Ovary (tissue), 10 donors: ENCODE measurements at regions of chr19 and their contacts with region 1.

Region 1: GRCh38 chr19:9584073-9584833 is at the start of gene ZNF121:
- DNase-seq: peak; percentile 80 to 90 (median 85)
- H3K4me3 ChIP-seq: peak within 1 kb of the TSS; percentile 85
- H3K27ac ChIP-seq: peak within 1 kb of the TSS; percentile 85 to 88
- H3K4me1 ChIP-seq: peaks cover 4% of the 10 kb centered on the region
- H3K27me3 ChIP-seq: no peaks in the 10 kb centered on the region
- CTCF ChIP-seq: no peak
- EP300 ChIP-seq: no peak
- POLR2A ChIP-seq: peak; percentile 64
- total RNA-seq, gene ZNF121: 19.6 to 49.0 (median 33.2) TPM

Region 2: DNA sequence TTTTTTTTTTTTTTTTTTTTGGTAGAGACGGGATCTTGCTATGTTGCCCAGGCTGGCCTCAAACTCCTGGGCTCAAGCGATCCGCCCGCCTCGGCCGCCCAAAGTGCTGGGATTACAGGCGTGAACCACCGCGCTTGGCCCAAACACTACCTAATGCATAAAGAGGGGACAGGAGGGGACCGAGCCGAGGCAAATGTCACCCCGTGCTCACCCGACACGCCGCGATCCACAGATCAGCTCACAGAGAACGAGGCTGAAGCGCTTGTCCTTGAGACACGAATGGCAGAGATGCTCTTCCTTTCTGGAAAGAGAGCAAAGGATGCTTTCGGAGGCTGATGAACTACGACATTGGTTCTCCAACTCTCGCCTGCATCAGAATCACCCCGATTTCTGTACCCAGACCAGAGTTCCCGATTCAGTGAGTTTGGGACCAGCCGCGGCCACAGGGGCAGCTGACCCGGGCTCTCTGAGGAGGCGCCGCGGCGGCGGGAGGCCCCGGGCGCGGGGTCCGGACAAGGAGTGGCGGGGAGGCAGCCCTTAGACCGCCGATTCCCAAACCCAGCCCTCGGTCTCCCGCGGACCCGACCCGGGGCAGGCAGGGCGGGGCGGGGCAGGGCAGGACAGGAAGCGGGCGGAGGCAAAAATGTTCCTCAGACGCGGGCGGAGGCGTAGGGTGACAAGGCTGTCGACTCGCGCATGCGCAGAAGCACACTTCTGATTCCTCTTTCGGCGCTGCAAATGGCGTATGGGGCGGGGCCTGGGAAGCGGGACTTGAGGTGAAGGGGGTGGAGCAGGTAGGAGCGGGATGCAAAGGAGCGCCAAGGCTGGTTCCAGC is 274.9 kb before region 1 on chr19 and contains the start of gene ZNF699:
- intact Hi-C with region 1: loop called in 1 of 4 experiments (anchors 10 kb)
- DNase-seq: peak; percentile 98 to 99 (median 99)
- H3K4me3 ChIP-seq: peak within 1 kb of the TSS; percentile 97
- H3K27ac ChIP-seq: peak within 1 kb of the TSS; percentile 72 to 90
- H3K4me1 ChIP-seq: peaks cover 1% of the 10 kb centered on the region
- H3K27me3 ChIP-seq: no peaks in the 10 kb centered on the region
- CTCF ChIP-seq: no peak
- EP300 ChIP-seq: no peak
- POLR2A ChIP-seq: peak; percentile 47
- total RNA-seq, gene ZNF699: 9.2 to 31.2 (median 14.2) TPM

Region 3: DNA sequence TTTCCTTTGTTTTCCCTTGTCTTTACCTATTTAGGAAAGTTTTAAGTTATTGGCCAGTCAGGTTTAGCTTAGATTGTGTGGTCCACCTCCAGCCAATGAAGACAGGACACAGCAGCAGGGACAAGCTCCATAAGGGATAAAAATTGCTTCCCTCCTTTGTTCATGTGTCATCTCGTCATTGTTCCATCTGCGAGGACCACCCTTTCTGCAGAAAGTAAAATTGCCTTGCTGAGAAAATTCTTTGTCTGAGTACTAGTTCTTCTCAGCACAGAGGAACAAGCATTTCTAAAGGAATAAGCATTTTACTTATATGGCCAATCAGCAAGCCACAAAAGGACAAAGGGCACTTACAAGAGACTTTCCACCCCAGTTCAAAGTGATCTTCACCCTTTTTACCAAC is 97.2 kb before region 1 on chr19:
- intact Hi-C with region 1: no loop called
- DNase-seq: no peak
- H3K4me3 ChIP-seq: no peak overlapping the region
- H3K27ac ChIP-seq: no peak overlapping the region
- H3K4me1 ChIP-seq: no peaks in the 10 kb centered on the region
- H3K27me3 ChIP-seq: no peaks in the 10 kb centered on the region
- CTCF ChIP-seq: no peak
- EP300 ChIP-seq: no peak
- POLR2A ChIP-seq: no peak

Region 4: GRCh38 chr19:9498183-9498902 is 85.9 kb before region 1 on chr19 and contains the start of gene ZNF560:
- intact Hi-C with region 1: no loop called
- DNase-seq: peak in 1 of 5 donors; percentile 11
- H3K4me3 ChIP-seq: no peak within 1 kb of the TSS
- H3K27ac ChIP-seq: no peak within 1 kb of the TSS
- H3K4me1 ChIP-seq: no peaks in the 10 kb centered on the region
- H3K27me3 ChIP-seq: no peaks in the 10 kb centered on the region
- CTCF ChIP-seq: no peak
- EP300 ChIP-seq: no peak
- POLR2A ChIP-seq: no peak
- total RNA-seq, gene ZNF560: 0.10 to 0.38 (median 0.24) TPM in 4 of 7 donors, not detected in the others

Region 5: GRCh38 chr19:9627856-9628255 is 43.6 kb after region 1 on chr19:
- intact Hi-C with region 1: no loop called
- DNase-seq: no peak
- H3K4me3 ChIP-seq: no peak overlapping the region
- H3K27ac ChIP-seq: no peak overlapping the region
- H3K4me1 ChIP-seq: no peaks in the 10 kb centered on the region
- H3K27me3 ChIP-seq: no peaks in the 10 kb centered on the region
- CTCF ChIP-seq: no peak
- EP300 ChIP-seq: no peak
- POLR2A ChIP-seq: no peak

Region 6: GRCh38 chr19:9671655-9672054 is 87.4 kb after region 1 on chr19:
- intact Hi-C with region 1: no loop called
- DNase-seq: no peak
- H3K4me3 ChIP-seq: no peak overlapping the region
- H3K27ac ChIP-seq: no peak overlapping the region
- H3K4me1 ChIP-seq: peaks cover 3% of the 10 kb centered on the region
- H3K27me3 ChIP-seq: no peaks in the 10 kb centered on the region
- CTCF ChIP-seq: no peak
- EP300 ChIP-seq: no peak
- POLR2A ChIP-seq: no peak